ENCODE measurements at regions of chr9 and their contacts with region 1.

Region 1: DNA sequence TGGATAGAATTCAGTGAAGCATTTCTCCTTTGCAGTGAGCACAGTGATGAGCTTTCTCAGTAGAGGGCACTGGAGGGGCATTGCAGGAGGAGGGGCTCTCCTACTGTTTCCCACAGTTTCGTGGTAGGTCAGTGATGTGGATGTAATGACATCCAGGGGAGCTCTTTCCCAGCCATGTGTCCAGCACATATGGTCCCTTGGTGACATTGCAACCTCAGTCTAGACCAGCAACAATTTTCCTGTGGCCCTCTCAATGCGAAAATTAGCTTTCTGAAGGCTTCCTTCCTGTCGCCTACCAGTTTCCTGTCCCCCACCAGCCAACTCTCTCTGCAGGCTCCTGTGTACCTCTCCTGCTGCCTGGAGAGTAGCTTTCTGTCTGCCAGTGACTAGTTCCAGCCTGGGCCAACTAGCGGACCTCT is 6.9 kb upstream of the PDCL start:
- DNase-seq: peak in 8 of 14 experiments; percentile 10 to 52 (median 22)
- ATAC-seq: peak; percentile 88
- H3K4me3 ChIP-seq: peak overlapping the region; percentile 34
- H3K4me3 Mint-ChIP-seq: peak overlapping the region; percentile 63
- H3K27ac ChIP-seq: no peak overlapping the region
- H3K27ac Mint-ChIP-seq: peak overlapping the region; percentile 79
- H3K4me1 ChIP-seq: peaks cover 14% of the 10 kb centered on the region
- H3K4me1 Mint-ChIP-seq: peaks cover 12% of the 10 kb centered on the region
- H3K27me3 ChIP-seq: no peaks in the 10 kb centered on the region
- H3K27me3 Mint-ChIP-seq: no peaks in the 10 kb centered on the region
- CTCF ChIP-seq: peak; percentile 32

Region 2: GRCh38 chr9:122816163-122816867 is 19.0 kb before region 1 on chr9:
- CTCF ChIA-PET with region 1: interaction called, 3 read pairs
- POLR2A ChIA-PET with region 1: interaction called, 12 read pairs
- intact Hi-C with region 1: no loop called
- DNase-seq: peak; percentile 26 to 70 (median 48)
- ATAC-seq: peak; percentile 91
- H3K4me3 ChIP-seq: peak overlapping the region; percentile 30
- H3K4me3 Mint-ChIP-seq: peak overlapping the region; percentile 80
- H3K27ac ChIP-seq: peak overlapping the region; percentile 71 to 82
- H3K27ac Mint-ChIP-seq: peak overlapping the region; percentile 97
- H3K4me1 ChIP-seq: peaks cover 28% of the 10 kb centered on the region
- H3K4me1 Mint-ChIP-seq: peaks cover 53% of the 10 kb centered on the region
- H3K27me3 ChIP-seq: no peaks in the 10 kb centered on the region
- H3K27me3 Mint-ChIP-seq: no peaks in the 10 kb centered on the region
- CTCF ChIP-seq: no peak

Region 3: GRCh38 chr9:122846371-122846940 is 11.1 kb after region 1 on chr9:
- CTCF ChIA-PET with region 1: interaction called, 8 read pairs
- POLR2A ChIA-PET with region 1: interaction called, 10 read pairs
- intact Hi-C with region 1: no loop called
- DNase-seq: peak in 4 of 14 experiments; percentile 31 to 52 (median 34)
- ATAC-seq: peak; percentile 80
- H3K4me3 ChIP-seq: no peak overlapping the region
- H3K4me3 Mint-ChIP-seq: peak overlapping the region; percentile 36
- H3K27ac ChIP-seq: no peak overlapping the region
- H3K27ac Mint-ChIP-seq: peak overlapping the region; percentile 87
- H3K4me1 ChIP-seq: no peaks in the 10 kb centered on the region
- H3K4me1 Mint-ChIP-seq: peaks cover 51% of the 10 kb centered on the region
- H3K27me3 ChIP-seq: no peaks in the 10 kb centered on the region
- H3K27me3 Mint-ChIP-seq: no peaks in the 10 kb centered on the region
- CTCF ChIP-seq: no peak

Region 4: DNA sequence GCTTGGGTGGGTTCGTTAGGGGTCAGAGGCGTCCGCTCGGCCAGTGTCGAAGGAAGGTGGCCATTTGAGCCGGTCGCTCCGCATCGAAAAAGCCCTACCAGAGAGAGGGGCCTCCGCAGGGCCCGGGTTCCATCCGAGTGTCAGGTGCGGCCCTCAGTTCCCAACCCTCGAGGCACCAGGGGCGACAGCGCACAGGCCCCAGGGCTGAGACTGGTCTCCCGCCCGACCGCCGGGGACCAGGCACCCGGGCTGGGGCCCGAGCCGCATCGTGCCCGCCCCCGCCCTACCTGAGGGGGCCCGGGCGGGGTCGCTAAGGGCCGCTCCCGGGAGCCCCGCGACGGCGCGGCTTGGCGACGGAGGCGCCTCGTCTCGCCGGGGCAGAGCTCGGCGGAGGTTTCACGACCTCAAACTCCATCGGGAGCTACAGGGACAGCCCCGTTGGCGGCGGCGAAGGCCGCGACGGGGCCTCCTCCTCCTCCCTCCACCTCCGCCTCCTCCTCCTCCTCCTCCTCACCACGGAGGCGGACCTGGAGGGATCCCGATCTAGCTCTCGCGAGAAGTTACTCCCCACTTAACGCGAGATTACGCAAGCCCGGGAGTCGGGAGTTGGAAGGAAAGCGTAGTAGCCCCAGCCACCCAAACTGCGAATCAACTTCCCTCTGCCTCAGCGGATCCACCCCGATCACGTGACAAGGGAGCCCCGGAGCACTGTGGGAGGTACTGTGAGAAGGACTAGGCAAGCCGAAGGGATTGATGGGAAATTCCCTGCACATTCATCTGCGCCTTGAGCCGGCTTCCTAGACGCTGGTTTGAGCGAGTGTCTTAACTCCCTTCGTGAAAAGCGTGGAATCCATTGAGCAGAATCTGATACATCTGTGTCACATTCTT is 69.7 kb after region 1 on chr9 and contains the start of gene RC3H2:
- CTCF ChIA-PET with region 1: no interaction called
- POLR2A ChIA-PET with region 1: interaction called, 15 read pairs
- intact Hi-C with region 1: no loop called
- DNase-seq: peak; percentile 91 to 100 (median 94)
- ATAC-seq: peak; percentile 92
- H3K4me3 ChIP-seq: peak within 1 kb of the TSS; percentile 89
- H3K4me3 Mint-ChIP-seq: peak within 1 kb of the TSS; percentile 100
- H3K27ac ChIP-seq: peak within 1 kb of the TSS; percentile 87
- H3K27ac Mint-ChIP-seq: peak within 1 kb of the TSS; percentile 99
- H3K4me1 ChIP-seq: peaks cover 11% of the 10 kb centered on the region
- H3K4me1 Mint-ChIP-seq: peaks cover 36% of the 10 kb centered on the region
- H3K27me3 ChIP-seq: no peaks in the 10 kb centered on the region
- H3K27me3 Mint-ChIP-seq: no peaks in the 10 kb centered on the region
- CTCF ChIP-seq: no peak
- total RNA-seq, gene RC3H2: 85.2 to 86.8 TPM

Measured in CD4-positive, alpha-beta T cell (primary cell).